AG04449 (cell line): ENCODE measurements at regions of chr14 and their contacts with region 1.

Region 1: DNA sequence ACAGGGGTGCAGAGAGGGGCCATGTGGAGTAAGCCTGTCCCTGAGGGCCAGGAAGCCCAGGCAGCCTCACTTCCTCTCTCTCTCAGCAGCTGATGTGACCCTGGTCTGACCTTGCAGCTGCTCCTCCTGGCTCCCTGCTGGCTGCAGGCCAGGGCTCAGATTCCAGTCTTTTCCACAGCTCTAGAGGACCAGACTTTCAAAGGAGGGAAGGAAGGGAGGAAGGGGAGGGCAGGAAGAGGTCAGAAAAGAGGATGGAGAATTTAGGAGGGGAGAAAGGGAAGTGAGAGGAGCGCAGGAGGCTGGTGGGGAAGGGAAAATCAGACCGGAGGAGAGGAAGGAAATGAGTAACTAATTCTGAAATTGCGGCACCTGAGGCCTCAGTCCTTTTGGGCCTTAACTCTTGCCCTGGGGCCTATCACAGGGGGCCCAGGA is 40.9 kb upstream of the VASH1 start:
- DNase-seq: no peak
- H3K4me3 ChIP-seq: no peak overlapping the region
- CTCF ChIP-seq: no peak

Region 2: GRCh38 chr14:76812211-76813044 is 92.0 kb after region 1 on chr14 and contains the start of gene ANGEL1:
- CTCF ChIA-PET with region 1: interaction called, 12 read pairs
- POLR2A ChIA-PET with region 1: no interaction called
- DNase-seq: no peak
- H3K4me3 ChIP-seq: peak within 1 kb of the TSS; percentile 75
- CTCF ChIP-seq: no peak

Region 3: GRCh38 chr14:76918751-76919543 is 198.5 kb after region 1 on chr14:
- CTCF ChIA-PET with region 1: no interaction called
- POLR2A ChIA-PET with region 1: no interaction called
- DNase-seq: peak; percentile 92
- H3K4me3 ChIP-seq: peak overlapping the region; percentile 39
- CTCF ChIP-seq: peak; percentile 27